ENCODE measurements at regions of chr6 and their contacts with region 1.

Region 1: DNA sequence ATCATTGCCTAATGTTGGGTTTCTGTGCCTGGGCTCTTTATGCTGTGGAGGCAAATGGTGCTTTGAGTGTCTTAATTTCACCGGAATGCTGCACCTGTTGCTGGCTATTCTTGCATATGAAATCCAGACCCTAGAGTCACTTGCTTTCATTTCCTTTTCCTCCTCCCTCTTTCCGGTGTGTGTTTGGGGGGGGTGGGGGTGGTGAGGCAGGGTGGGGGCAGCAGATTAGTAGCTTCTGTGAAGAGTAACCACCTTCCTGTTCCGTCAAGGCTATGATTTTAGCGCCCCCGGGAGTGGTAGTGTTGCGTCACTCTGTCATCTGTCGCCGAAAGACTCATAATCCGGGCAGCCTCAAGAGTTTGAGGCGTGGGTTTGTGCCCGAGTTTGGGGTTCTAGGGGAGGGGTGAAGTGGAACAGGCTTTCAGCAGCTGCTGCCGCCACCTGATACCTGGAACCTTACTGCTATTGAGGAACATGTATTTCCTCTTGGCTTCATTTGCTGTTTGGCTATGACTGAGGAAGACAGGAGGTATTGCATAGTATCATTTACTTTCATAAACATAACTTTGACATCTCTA is 49.1 kb downstream of the UTRN start:
- DNase-seq: no peak
- H3K4me3 ChIP-seq: no peak overlapping the region
- H3K27ac ChIP-seq: no peak overlapping the region
- H3K4me1 ChIP-seq: peaks cover 47% of the 10 kb centered on the region
- H3K27me3 ChIP-seq: no peaks in the 10 kb centered on the region
- CTCF ChIP-seq: no peak

Region 2: GRCh38 chr6:144415014-144415413 is 80.8 kb after region 1 on chr6:
- CTCF ChIA-PET with region 1: no interaction called
- dilution Hi-C with region 1: no loop called
- in situ Hi-C with region 1: no loop called
- intact Hi-C with region 1: loop called (anchors 5 kb)
- DNase-seq: peak; percentile 74
- H3K4me3 ChIP-seq: no peak overlapping the region
- H3K27ac ChIP-seq: peak overlapping the region; percentile 35
- H3K4me1 ChIP-seq: peaks cover 18% of the 10 kb centered on the region
- H3K27me3 ChIP-seq: no peaks in the 10 kb centered on the region
- CTCF ChIP-seq: no peak